PC-3 (cell line): ENCODE measurements at regions of chr16 and their contacts with region 1.

Region 1: DNA sequence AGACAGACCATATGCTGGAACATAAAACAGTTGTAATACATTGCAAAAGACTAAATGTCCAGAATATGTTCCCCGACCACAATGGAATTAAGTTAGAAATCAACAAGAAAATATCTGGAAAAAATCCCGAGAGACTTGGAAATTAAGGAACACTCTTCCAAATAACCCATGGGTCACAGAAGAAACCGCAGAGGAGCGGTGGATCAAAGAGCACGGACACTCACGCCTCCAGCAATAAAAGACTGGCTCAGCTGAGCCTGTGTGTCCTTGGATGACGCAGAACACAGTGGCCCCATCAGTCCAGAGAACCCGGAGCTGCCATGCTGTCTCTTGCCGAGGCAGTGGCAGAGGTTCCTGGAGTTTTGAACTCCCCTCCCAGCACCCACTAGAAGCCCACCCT is 30.9 kb upstream of the FOXF1 start:
- DNase-seq: no peak
- ATAC-seq: no peak
- H3K4me3 ChIP-seq: no peak overlapping the region
- H3K27ac ChIP-seq: no peak overlapping the region
- H3K4me1 ChIP-seq: no peaks in the 10 kb centered on the region
- H3K27me3 ChIP-seq: peaks cover 66% of the 10 kb centered on the region
- CTCF ChIP-seq: no peak

Region 2: DNA sequence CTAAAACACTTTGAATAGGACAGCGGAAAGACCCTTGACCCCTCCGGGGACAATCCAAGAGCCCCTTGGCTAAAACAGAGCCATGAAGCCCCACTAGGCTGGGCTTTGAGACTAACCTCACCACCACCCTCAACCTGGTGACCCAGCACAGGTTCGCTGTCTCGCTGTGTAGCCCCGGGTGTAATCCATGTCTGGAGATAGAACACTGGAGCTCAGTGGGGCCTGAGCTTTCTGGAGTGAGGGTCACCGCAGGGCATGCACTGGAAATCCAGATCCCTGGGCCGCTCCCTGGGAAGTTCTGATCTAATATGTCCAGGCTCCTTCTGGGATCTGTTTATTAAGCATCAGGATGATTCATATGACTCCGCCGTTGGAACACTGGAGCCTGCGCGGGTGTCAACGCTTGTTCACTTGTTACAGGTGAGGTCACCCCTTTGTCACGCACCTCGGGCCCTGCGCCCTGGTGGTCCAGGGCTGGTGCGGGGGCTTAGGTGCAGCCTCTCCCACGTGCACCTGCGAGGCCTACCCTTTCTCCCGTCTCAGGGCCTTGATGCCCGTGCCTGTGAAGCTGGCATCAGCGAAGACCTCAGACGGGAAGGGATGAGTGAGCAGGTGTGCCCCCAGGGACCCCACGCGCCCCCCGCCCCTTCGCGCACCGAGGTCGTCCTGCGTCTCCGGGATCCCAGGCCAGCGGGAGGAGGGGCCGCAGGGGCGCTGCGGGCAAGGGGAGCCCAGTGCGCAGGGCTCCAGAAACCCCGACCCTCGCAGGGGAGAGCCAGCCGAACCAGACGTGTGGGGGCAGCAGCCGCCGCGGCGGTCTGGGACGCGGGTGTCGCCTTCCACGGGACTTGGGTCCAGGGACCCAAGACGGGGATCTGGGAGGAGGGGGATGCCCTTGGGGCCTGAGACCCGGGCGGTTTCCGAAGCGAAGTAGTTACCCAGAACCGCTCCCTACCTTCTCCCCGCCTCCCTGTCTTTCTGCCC is 193.2 kb before region 1 on chr16:
- CTCF ChIA-PET with region 1: no interaction called
- POLR2A ChIA-PET with region 1: no interaction called
- intact Hi-C with region 1: no loop called
- DNase-seq: no peak
- ATAC-seq: no peak
- H3K4me3 ChIP-seq: no peak overlapping the region
- H3K27ac ChIP-seq: no peak overlapping the region
- H3K4me1 ChIP-seq: no peaks in the 10 kb centered on the region
- H3K27me3 ChIP-seq: peaks cover 79% of the 10 kb centered on the region
- CTCF ChIP-seq: no peak

Region 3: GRCh38 chr16:86432691-86433090 is 46.7 kb before region 1 on chr16:
- CTCF ChIA-PET with region 1: no interaction called
- POLR2A ChIA-PET with region 1: no interaction called
- intact Hi-C with region 1: no loop called
- DNase-seq: no peak
- ATAC-seq: no peak
- H3K4me3 ChIP-seq: no peak overlapping the region
- H3K27ac ChIP-seq: no peak overlapping the region
- H3K4me1 ChIP-seq: no peaks in the 10 kb centered on the region
- H3K27me3 ChIP-seq: peaks cover 76% of the 10 kb centered on the region
- CTCF ChIP-seq: no peak

Region 4: GRCh38 chr16:86458149-86458777 is 21.2 kb before region 1 on chr16:
- CTCF ChIA-PET with region 1: interaction called, 15 read pairs
- POLR2A ChIA-PET with region 1: no interaction called
- intact Hi-C with region 1: no loop called
- DNase-seq: no peak
- ATAC-seq: no peak
- H3K4me3 ChIP-seq: no peak overlapping the region
- H3K27ac ChIP-seq: no peak overlapping the region
- H3K4me1 ChIP-seq: no peaks in the 10 kb centered on the region
- H3K27me3 ChIP-seq: peaks cover 45% of the 10 kb centered on the region
- CTCF ChIP-seq: no peak